Head of caudate nucleus (tissue), 42 donors: ENCODE measurements at regions of chr4 and their contacts with region 1.

Region 1: DNA sequence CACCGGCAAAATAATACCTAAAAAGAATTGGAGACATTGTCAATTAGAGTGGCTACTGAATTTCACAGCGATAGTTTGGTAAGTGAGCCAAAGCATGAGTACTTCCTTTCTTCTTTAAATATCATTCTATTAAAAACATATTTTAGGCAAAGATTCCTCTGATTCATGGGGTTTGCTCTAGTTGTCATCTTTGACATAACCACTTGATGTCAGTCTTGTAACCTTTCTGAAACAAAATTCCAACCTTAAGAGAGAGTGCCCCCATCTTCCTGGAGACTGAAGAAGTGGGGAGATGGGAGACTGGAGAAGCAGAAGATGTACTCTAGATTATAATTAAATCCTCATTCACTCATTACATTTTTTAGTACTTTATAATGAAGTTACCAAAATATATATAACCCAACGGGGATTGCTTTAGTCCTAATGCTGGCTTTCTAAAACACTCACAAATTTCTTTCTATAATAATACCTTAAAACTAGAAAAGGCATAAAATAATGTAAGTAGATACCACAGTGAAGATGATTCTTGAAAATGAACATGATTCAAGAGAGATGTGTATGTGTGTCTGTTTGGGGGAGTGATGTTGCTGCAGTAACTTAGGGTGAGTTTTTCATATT is 96.4 kb downstream of the EMCN start:
- DNase-seq: peak in 4 of 42 donors; percentile 21 to 38 (median 30)

Region 2: GRCh38 chr4:100517864-100518341 is 96.4 kb after region 1 on chr4 and contains the start of gene EMCN:
- intact Hi-C with region 1: loop called (anchors 10 kb)
- DNase-seq: no peak

Region 3: GRCh38 chr4:100823066-100823992 is 401.9 kb after region 1 on chr4:
- intact Hi-C with region 1: loop called (anchors 10 kb)
- DNase-seq: peak in 1 of 42 donors; percentile 23